ENCODE measurements at regions of chr6 and their contacts with region 1.

Region 1: DNA sequence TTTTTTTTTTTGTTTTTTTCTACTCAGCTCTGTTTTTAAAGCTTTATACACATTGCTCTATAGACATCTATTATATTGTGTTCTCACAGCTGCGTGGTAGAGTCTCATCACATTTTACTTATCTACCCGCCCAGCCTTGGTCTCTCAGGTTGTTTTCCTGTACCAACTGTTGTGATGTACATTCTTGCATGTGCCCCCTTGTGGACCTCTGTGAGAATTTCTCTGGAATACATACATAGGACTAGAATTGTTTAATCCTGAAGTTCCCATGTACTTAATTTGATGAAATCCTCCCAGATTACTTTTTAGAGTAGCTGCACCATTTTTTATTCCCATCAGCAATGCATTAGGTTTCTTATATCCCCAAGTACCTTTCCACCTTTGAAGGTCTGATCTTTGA is 40.4 kb upstream of the TINAG start:
- DNase-seq: peak; percentile 72
- H3K4me3 Mint-ChIP-seq: no peak overlapping the region
- H3K27ac Mint-ChIP-seq: no peak overlapping the region
- H3K4me1 Mint-ChIP-seq: no peaks in the 10 kb centered on the region
- H3K27me3 Mint-ChIP-seq: no peaks in the 10 kb centered on the region
- CTCF ChIP-seq: peak; percentile 54

Region 2: GRCh38 chr6:54244430-54244829 is 23.4 kb before region 1 on chr6:
- CTCF ChIA-PET with region 1: interaction called, 10 read pairs
- POLR2A ChIA-PET with region 1: no interaction called
- intact Hi-C with region 1: no loop called
- DNase-seq: peak; percentile 40
- H3K4me3 Mint-ChIP-seq: no peak overlapping the region
- H3K27ac Mint-ChIP-seq: no peak overlapping the region
- H3K4me1 Mint-ChIP-seq: no peaks in the 10 kb centered on the region
- H3K27me3 Mint-ChIP-seq: no peaks in the 10 kb centered on the region
- CTCF ChIP-seq: peak; percentile 60

Region 3: GRCh38 chr6:54255886-54256285 is 11.9 kb before region 1 on chr6:
- CTCF ChIA-PET with region 1: interaction called, 11 read pairs
- POLR2A ChIA-PET with region 1: interaction called, 3 read pairs
- intact Hi-C with region 1: no loop called
- DNase-seq: no peak
- H3K4me3 Mint-ChIP-seq: no peak overlapping the region
- H3K27ac Mint-ChIP-seq: no peak overlapping the region
- H3K4me1 Mint-ChIP-seq: no peaks in the 10 kb centered on the region
- H3K27me3 Mint-ChIP-seq: no peaks in the 10 kb centered on the region
- CTCF ChIP-seq: no peak

Measured in MCF 10A (cell line).